ENCODE measurements at regions of chr18 and their contacts with region 1.

Region 1: GRCh38 chr18:32735781-32736180 is 37.0 kb downstream of the KLHL14 start:
- DNase-seq: no peak
- ATAC-seq: no peak

Region 2: DNA sequence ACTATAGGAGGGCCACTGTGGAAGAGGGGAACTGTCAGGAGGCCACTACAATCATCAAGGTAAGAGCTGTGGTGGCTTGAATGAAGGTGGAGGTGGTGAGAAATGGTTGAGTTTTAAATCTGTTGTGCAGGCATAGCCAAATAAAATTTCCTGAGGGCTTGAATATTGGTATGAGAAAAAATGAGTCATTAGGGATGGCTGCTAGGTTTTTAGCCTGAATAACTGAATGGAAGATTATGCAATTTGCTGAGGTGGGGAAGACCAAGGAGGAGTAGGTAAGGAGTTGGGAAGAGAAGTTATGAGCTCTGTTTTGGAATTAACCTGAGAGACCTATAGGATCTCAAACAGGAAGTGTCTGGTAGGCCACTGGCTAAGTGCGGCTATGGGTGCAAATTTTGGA is 47.0 kb before region 1 on chr18:
- intact Hi-C with region 1: loop called in 1 of 2 experiments (anchors 5 kb)
- DNase-seq: no peak
- ATAC-seq: no peak